ENCODE measurements at regions of chr4 and their contacts with region 1.

Region 1: GRCh38 chr4:140252742-140253555 is 99.0 kb upstream of the MAML3 start:
- DNase-seq: peak; percentile 41 to 64 (median 47)
- H3K4me3 ChIP-seq: peak overlapping the region in 1 of 2 donors; percentile 26
- H3K4me3 Mint-ChIP-seq: peak overlapping the region; percentile 68 to 87 (median 78)
- H3K27ac ChIP-seq: no peak overlapping the region
- H3K27ac Mint-ChIP-seq: peak overlapping the region in 2 of 7 donors; percentile 8 to 37
- H3K4me1 ChIP-seq: no peaks in the 10 kb centered on the region
- H3K4me1 Mint-ChIP-seq: peaks cover 0 to 6% (median 2%) of the 10 kb centered on the region in 4 donors
- H3K27me3 ChIP-seq: peaks cover 5% of the 10 kb centered on the region
- H3K27me3 Mint-ChIP-seq: peaks cover 5 to 8% of the 10 kb centered on the region in 2 donors

Region 2: DNA sequence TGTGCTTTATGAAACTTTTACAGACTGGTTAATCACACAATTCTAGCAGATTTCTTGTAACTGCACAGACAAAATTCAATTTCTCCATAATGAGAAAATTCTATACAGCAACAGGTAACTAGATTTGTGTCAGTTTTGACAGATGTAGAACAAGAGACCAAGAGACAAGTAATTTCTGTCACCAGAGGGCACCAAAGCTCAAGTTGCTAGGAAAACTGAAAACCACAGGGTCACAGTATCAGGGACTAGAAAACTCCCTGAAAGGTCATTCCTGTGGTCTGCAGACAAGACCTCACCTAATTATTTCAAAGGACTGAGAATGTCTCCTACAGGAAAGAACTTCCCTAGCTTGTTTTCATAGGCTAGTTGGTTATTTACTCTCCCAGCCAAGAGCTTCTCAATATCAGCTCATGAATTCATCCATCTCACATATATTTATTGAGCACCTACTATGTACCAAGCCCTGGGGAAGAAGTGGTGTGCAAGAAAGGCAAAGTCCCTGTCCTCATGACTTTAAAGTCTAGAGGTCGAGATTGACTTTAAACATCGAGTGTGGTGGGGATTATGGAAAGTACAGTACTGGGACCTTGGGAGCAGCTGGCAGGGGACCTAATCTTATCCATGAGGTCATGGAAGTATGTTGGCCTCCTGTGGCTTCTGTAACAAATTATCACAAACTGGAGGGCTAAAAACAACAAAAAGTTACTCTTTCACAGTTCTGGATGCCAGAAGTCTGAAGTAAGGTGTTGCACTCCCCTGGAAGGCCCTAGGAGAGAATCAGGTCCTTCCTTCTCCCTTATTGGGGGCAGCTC is 649.2 kb before region 1 on chr4:
- CTCF ChIA-PET with region 1: interaction called, 3 read pairs
- POLR2A ChIA-PET with region 1: no interaction called
- intact Hi-C with region 1: loop called (anchors 2 kb)
- DNase-seq: peak in 4 of 5 donors; percentile 22 to 36 (median 34)
- H3K4me3 ChIP-seq: no peak overlapping the region
- H3K4me3 Mint-ChIP-seq: no peak overlapping the region
- H3K27ac ChIP-seq: no peak overlapping the region
- H3K27ac Mint-ChIP-seq: no peak overlapping the region
- H3K4me1 ChIP-seq: peaks cover 4% of the 10 kb centered on the region
- H3K4me1 Mint-ChIP-seq: peaks cover 13 to 15% (median 14%) of the 10 kb centered on the region in 4 donors
- H3K27me3 ChIP-seq: no peaks in the 10 kb centered on the region
- H3K27me3 Mint-ChIP-seq: peaks cover 4 to 6% of the 10 kb centered on the region in 2 donors

Region 3: DNA sequence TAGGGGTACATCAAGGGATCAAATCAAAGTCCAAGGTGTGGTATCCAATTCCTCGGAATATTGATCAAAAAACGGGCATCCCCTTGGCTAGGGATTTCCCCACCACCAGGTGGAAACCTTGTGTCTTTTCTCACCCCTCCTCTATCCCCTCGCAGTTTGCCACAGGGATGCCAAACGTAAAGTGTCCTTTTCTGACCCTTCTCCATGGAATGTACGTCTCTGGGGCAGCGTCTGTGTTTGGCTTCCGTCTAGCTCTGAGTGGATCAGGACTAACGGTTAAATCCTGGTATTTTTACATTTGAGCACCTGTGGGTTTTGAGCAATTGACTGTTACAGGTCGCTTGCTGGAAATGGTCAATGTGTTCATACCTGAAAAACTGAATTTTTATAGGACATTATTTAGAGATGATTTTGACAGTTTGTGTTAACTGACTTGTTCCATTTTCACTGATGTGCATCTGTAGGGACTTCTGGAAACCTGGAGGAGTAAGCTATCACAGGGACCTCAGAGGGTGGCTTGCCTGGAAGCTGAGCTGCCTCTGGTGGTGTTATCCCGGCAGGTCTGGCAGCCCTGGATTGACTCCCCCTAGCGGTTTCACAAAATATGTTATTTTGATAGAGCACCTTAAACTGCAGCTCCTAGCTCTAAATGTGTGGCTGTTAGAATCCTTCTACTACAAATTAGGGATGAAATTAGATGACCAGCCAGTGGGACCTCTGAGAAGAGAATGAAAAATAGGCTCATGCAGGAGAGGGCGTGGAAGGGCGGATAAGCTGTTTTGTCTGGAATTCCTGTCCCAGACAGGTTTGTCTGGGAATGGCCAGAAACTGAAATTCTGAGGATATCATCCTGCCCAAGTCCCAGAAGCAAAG is 596.1 kb before region 1 on chr4:
- CTCF ChIA-PET with region 1: interaction called, 25 read pairs
- POLR2A ChIA-PET with region 1: no interaction called
- intact Hi-C with region 1: no loop called
- DNase-seq: peak; percentile 59 to 65 (median 62)
- H3K4me3 ChIP-seq: no peak overlapping the region
- H3K4me3 Mint-ChIP-seq: peak overlapping the region in 6 of 8 donors; percentile 23 to 75 (median 72)
- H3K27ac ChIP-seq: no peak overlapping the region
- H3K27ac Mint-ChIP-seq: peak overlapping the region in 6 of 7 donors; percentile 13 to 88 (median 68)
- H3K4me1 ChIP-seq: peaks cover 18% of the 10 kb centered on the region
- H3K4me1 Mint-ChIP-seq: peaks cover 15 to 26% (median 20%) of the 10 kb centered on the region in 4 donors
- H3K27me3 ChIP-seq: no peaks in the 10 kb centered on the region
- H3K27me3 Mint-ChIP-seq: peaks cover 0 to 2% of the 10 kb centered on the region in 2 donors

Region 4: DNA sequence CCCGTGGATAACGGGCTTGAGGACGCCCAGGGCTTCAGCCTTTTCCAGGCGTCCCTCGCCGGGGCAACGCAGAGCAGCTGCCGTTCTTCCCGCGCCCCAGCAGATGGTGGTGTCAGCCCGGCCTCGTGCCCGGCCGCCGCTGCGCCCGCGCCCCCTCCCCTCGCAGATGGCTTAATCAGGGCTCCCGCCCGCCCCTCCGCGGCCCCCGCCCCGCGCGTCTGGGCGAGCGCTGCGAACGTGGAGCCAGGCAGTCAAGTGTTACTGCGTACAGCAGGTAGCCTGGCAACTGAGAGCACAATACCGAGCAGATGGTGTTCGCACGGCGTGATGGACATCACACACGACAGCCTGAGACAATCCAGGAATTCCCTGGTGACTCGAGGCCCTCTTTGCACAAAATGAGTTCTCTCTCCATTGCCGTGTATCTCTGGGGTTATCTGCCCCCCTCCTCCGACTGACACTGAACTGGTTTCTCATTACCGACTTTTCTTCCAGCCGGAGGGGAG is 518.0 kb before region 1 on chr4:
- CTCF ChIA-PET with region 1: interaction called, 5 read pairs
- POLR2A ChIA-PET with region 1: no interaction called
- intact Hi-C with region 1: loop called (anchors 1 kb)
- DNase-seq: peak; percentile 19 to 39 (median 25)
- H3K4me3 ChIP-seq: no peak overlapping the region
- H3K4me3 Mint-ChIP-seq: peak overlapping the region; percentile 60 to 84 (median 68)
- H3K27ac ChIP-seq: no peak overlapping the region
- H3K27ac Mint-ChIP-seq: peak overlapping the region in 1 of 7 donors; percentile 19
- H3K4me1 ChIP-seq: peaks cover 14% of the 10 kb centered on the region
- H3K4me1 Mint-ChIP-seq: peaks cover 0 to 11% (median 8%) of the 10 kb centered on the region in 4 donors
- H3K27me3 ChIP-seq: peaks cover 4% of the 10 kb centered on the region
- H3K27me3 Mint-ChIP-seq: peaks cover 38 to 45% of the 10 kb centered on the region in 2 donors

Region 5: GRCh38 chr4:140012688-140013486 is 240.1 kb before region 1 on chr4:
- CTCF ChIA-PET with region 1: interaction called, 135 read pairs
- POLR2A ChIA-PET with region 1: interaction called, 3 read pairs
- intact Hi-C with region 1: loop called (anchors 1 kb)
- DNase-seq: peak; percentile 56 to 64 (median 61)
- H3K4me3 ChIP-seq: no peak overlapping the region
- H3K4me3 Mint-ChIP-seq: no peak overlapping the region
- H3K27ac ChIP-seq: no peak overlapping the region
- H3K27ac Mint-ChIP-seq: no peak overlapping the region
- H3K4me1 ChIP-seq: no peaks in the 10 kb centered on the region
- H3K4me1 Mint-ChIP-seq: peaks cover 0 to 3% (median under 1%) of the 10 kb centered on the region in 4 donors
- H3K27me3 ChIP-seq: no peaks in the 10 kb centered on the region
- H3K27me3 Mint-ChIP-seq: peaks cover 6 to 14% of the 10 kb centered on the region in 2 donors

Region 6: DNA sequence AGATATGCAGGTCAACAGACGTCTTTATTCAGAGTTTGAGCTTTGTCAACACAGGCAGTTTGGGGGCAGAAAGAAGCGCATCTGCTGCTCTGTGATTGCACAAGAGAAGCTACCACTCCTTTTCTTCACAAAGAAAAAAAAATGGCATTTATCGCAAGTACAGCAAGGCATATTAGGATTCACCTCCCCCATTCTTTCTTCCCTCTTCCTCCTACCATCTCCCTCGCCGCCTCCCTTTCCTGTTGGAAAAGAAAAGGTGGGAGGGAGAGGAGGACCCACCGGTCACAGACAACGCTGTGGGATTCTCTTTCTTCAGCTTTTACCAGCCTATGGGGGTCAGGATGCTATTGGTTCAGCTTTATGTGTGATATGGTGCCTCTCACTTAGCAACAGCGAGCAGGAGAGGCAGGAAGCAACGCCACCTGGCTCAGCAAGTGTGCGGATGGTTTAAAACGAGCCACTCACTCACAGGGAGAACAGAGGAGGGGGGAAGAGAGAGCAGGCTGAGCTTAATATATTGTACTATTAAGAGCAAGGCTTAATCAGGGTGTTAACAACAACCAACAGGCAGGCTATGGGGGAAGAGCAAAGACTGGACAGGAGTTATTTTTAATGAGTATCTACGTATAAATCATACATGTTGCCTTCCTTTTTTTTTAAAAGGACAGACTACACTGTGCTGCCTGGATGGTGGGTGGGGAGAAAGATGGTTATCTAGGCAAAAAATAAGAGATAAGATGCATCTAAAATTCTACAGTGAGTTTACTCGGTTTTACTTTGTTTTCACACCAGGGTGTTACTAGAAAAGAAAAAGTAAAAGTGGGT is 203.7 kb before region 1 on chr4:
- CTCF ChIA-PET with region 1: interaction called, 34 read pairs
- POLR2A ChIA-PET with region 1: no interaction called
- intact Hi-C with region 1: loop called (anchors 1 kb)
- DNase-seq: peak; percentile 26 to 50 (median 42)
- H3K4me3 ChIP-seq: peak overlapping the region in 1 of 2 donors; percentile 17
- H3K4me3 Mint-ChIP-seq: peak overlapping the region; percentile 76 to 92 (median 85)
- H3K27ac ChIP-seq: no peak overlapping the region
- H3K27ac Mint-ChIP-seq: peak overlapping the region; percentile 1 to 91 (median 85)
- H3K4me1 ChIP-seq: peaks cover 19% of the 10 kb centered on the region
- H3K4me1 Mint-ChIP-seq: peaks cover 14 to 29% (median 16%) of the 10 kb centered on the region in 4 donors
- H3K27me3 ChIP-seq: no peaks in the 10 kb centered on the region
- H3K27me3 Mint-ChIP-seq: peaks cover 3 to 6% of the 10 kb centered on the region in 2 donors

Region 7: GRCh38 chr4:140266991-140267426 is 14.1 kb after region 1 on chr4:
- CTCF ChIA-PET with region 1: interaction called, 17 read pairs
- POLR2A ChIA-PET with region 1: no interaction called
- intact Hi-C with region 1: no loop called
- DNase-seq: no peak
- H3K4me3 ChIP-seq: no peak overlapping the region
- H3K4me3 Mint-ChIP-seq: no peak overlapping the region
- H3K27ac ChIP-seq: no peak overlapping the region
- H3K27ac Mint-ChIP-seq: no peak overlapping the region
- H3K4me1 ChIP-seq: no peaks in the 10 kb centered on the region
- H3K4me1 Mint-ChIP-seq: no peaks in the 10 kb centered on the region
- H3K27me3 ChIP-seq: no peaks in the 10 kb centered on the region
- H3K27me3 Mint-ChIP-seq: peaks cover 1 to 14% of the 10 kb centered on the region in 2 donors

Measured in CD4-positive, alpha-beta memory T cell (primary cell).